Heart left ventricle (tissue), 16 donors: ENCODE measurements at regions of chr12 and their contacts with region 1.

Region 1: GRCh38 chr12:26821212-26821701 is 11.7 kb downstream of the ITPR2 start:
- DNase-seq: no peak
- ATAC-seq: peak in 2 of 4 donors; percentile 57 to 71
- H3K4me3 ChIP-seq: no peak overlapping the region
- H3K27ac ChIP-seq: peak overlapping the region in 2 of 12 donors; percentile 40 to 47
- H3K4me1 ChIP-seq: peaks cover 0 to 28% (median 3%) of the 10 kb centered on the region in 12 donors
- H3K27me3 ChIP-seq: no peaks in the 10 kb centered on the region
- CTCF ChIP-seq: no peak
- POLR2A ChIP-seq: no peak

Region 2: GRCh38 chr12:26732005-26732908 is 89.0 kb before region 1 on chr12:
- intact Hi-C with region 1: loop called in 1 of 10 experiments (anchors 10 kb)
- DNase-seq: no peak
- ATAC-seq: peak in 2 of 4 donors; percentile 22 to 39
- H3K4me3 ChIP-seq: no peak overlapping the region
- H3K27ac ChIP-seq: peak overlapping the region in 1 of 12 donors; percentile 68
- H3K4me1 ChIP-seq: peaks cover 0 to 59% (median 10%) of the 10 kb centered on the region in 12 donors
- H3K27me3 ChIP-seq: no peaks in the 10 kb centered on the region
- CTCF ChIP-seq: no peak
- POLR2A ChIP-seq: no peak